Heart left ventricle (tissue), 16 donors: ENCODE measurements at regions of chr3 and their contacts with region 1.

Region 1: DNA sequence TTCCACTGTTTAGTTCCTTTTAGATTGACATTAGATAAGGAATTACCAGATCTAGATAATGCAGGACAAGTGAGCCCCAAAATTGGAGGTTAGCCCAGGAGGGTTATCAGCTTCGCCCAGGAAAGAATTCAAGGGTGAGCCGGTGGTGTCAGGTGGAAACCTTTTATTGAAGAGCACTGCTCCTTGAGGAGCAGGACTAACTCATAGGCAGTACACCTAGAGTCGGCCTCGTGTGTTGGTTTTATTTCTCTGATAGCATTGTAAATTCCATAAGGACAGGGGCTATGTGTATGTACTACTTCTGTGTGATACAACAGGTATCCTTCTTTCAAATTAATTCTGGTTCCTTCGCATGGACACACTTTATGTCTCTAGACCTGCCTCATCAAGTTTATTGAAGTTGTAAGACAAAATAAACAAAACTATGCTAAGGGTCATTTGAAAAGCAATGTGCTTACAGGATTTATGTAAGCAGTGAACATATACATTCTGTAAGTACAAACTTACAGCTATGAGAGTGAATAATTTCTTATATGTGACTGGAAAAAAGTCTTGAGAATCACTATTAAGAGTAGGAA is 57.2 kb downstream of the SNX4 start:
- DNase-seq: no peak
- ATAC-seq: no peak
- H3K4me3 ChIP-seq: no peak overlapping the region
- H3K27ac ChIP-seq: no peak overlapping the region
- H3K4me1 ChIP-seq: peaks cover 0 to 11% (median 0%) of the 10 kb centered on the region in 12 donors
- H3K27me3 ChIP-seq: no peaks in the 10 kb centered on the region
- CTCF ChIP-seq: no peak
- POLR2A ChIP-seq: no peak

Region 2: DNA sequence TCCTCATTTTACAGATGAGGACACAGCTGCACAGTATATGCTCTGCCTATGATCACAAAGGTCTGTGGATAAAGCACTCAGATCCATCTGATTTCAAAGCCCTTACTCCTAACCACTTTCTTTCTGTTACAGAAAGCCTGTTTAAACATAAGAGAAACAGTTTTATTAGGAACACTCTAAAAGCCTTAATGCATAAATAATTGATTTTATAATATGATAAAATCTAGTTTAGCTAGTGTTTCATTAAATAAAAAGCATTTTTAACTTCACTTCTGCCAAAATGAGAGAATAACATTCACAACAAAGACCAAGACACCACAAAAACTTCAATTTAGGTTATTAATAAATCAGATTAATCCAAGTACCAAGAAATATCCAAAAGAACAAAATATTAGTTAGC is 35.8 kb after region 1 on chr3:
- intact Hi-C with region 1: loop called in 1 of 10 experiments (anchors 2 kb)
- DNase-seq: no peak
- ATAC-seq: no peak
- H3K4me3 ChIP-seq: no peak overlapping the region
- H3K27ac ChIP-seq: no peak overlapping the region
- H3K4me1 ChIP-seq: no peaks in the 10 kb centered on the region
- H3K27me3 ChIP-seq: no peaks in the 10 kb centered on the region
- CTCF ChIP-seq: no peak
- POLR2A ChIP-seq: no peak

Region 3: DNA sequence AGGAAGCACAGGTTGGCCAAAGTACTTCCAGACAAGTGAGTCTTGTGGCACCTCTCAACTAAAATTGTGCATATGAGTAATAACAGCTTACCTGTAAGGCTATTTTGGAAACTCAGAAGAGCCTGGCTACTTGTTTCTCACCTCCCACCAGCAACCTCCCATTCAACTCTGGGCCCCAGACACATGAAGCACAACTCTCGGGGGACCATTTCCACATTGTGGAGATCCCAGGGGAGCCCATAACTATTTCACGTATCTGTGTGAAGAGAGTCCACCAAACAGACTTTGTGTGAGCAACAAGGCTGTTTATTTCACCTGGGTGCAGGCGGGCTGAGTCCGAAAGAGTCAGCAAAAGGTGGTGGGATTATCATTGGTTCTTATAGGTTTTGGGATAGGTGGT is 62.3 kb after region 1 on chr3:
- intact Hi-C with region 1: no loop called
- DNase-seq: no peak
- ATAC-seq: no peak
- H3K4me3 ChIP-seq: no peak overlapping the region
- H3K27ac ChIP-seq: no peak overlapping the region
- H3K4me1 ChIP-seq: peaks cover 0 to 7% (median 0%) of the 10 kb centered on the region in 12 donors
- H3K27me3 ChIP-seq: no peaks in the 10 kb centered on the region
- CTCF ChIP-seq: no peak
- POLR2A ChIP-seq: no peak